ENCODE measurements at regions of chr2 and their contacts with region 1.

Region 1: GRCh38 chr2:84881581-84882414 is 914 bp upstream of the TRABD2A start:
- DNase-seq: peak; percentile 96
- H3K4me3 Mint-ChIP-seq: peak overlapping the region; percentile 94
- H3K27ac Mint-ChIP-seq: peak overlapping the region; percentile 96
- H3K4me1 Mint-ChIP-seq: peaks cover 54% of the 10 kb centered on the region
- H3K27me3 Mint-ChIP-seq: no peaks in the 10 kb centered on the region

Region 2: DNA sequence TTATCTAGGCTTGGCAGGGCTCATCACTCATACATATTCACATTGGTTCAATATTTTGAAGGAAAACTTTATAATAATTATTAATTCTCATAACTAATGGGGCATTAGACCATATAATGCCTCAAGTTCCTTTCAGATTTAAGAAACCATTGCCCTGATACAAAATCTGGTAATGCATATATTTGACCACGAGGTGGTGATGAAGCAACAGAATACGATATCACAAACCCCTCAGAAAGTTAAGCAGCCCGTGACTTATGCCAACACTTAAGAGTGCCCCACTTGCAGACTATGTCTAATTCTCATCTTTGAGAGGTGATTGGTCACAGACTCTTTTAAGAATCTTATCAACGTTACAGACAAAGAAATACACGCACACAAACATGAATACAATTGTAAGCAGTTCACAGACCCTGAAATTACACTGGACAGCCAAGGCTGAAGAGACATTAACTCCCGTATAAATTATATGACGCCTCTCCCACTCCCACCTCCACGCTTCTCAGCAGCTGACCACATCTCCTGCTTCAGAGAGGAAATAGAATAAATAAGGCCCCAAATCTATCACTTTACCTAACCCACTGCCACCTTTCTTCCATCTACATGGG is 386.2 kb before region 1 on chr2:
- intact Hi-C with region 1: loop called (anchors 1 kb)
- DNase-seq: peak; percentile 84
- H3K4me3 Mint-ChIP-seq: no peak overlapping the region
- H3K27ac Mint-ChIP-seq: no peak overlapping the region
- H3K4me1 Mint-ChIP-seq: peaks cover 10% of the 10 kb centered on the region
- H3K27me3 Mint-ChIP-seq: peaks cover 8% of the 10 kb centered on the region

Region 3: GRCh38 chr2:84781942-84782716 is 99.7 kb before region 1 on chr2:
- intact Hi-C with region 1: loop called (anchors 2 kb)
- DNase-seq: peak; percentile 86
- H3K4me3 Mint-ChIP-seq: peak overlapping the region; percentile 50
- H3K27ac Mint-ChIP-seq: peak overlapping the region; percentile 90
- H3K4me1 Mint-ChIP-seq: peaks cover 57% of the 10 kb centered on the region
- H3K27me3 Mint-ChIP-seq: no peaks in the 10 kb centered on the region

Region 4: GRCh38 chr2:84807063-84807830 is 74.6 kb before region 1 on chr2:
- intact Hi-C with region 1: no loop called
- DNase-seq: no peak
- H3K4me3 Mint-ChIP-seq: no peak overlapping the region
- H3K27ac Mint-ChIP-seq: no peak overlapping the region
- H3K4me1 Mint-ChIP-seq: peaks cover 2% of the 10 kb centered on the region
- H3K27me3 Mint-ChIP-seq: peaks cover 8% of the 10 kb centered on the region

Region 5: DNA sequence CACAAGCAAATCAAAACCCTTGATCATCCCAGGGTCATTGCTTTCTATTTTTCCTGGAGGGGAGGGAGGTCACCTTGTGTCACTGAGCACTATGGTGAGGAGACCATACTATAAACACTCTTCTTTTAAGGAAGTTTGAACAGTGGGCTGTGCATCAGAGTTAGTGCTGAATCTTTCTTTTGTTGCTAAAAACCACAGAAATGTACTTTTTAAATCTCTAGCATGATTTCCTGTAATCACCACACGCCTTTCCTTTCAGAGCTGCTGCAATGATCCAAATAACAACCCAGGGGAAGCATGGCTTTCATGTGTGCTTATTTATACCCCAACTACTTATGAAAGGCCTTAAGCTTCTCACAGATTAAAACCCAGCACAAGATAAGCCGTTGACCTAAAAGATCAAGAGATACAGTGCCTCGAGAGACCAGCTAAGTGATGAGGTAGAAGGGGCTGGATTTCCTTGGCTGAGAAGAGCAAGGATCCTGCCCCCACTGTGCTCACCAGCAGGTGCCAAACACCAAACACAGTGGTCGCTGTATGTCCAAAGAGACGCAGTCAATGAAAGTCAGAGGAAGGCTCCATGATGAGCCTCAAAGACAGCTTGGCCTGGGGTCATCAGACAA is 35.6 kb before region 1 on chr2:
- intact Hi-C with region 1: loop called (anchors 2 kb)
- DNase-seq: peak; percentile 88
- H3K4me3 Mint-ChIP-seq: peak overlapping the region; percentile 70
- H3K27ac Mint-ChIP-seq: peak overlapping the region; percentile 92
- H3K4me1 Mint-ChIP-seq: peaks cover 84% of the 10 kb centered on the region
- H3K27me3 Mint-ChIP-seq: no peaks in the 10 kb centered on the region

Region 6: DNA sequence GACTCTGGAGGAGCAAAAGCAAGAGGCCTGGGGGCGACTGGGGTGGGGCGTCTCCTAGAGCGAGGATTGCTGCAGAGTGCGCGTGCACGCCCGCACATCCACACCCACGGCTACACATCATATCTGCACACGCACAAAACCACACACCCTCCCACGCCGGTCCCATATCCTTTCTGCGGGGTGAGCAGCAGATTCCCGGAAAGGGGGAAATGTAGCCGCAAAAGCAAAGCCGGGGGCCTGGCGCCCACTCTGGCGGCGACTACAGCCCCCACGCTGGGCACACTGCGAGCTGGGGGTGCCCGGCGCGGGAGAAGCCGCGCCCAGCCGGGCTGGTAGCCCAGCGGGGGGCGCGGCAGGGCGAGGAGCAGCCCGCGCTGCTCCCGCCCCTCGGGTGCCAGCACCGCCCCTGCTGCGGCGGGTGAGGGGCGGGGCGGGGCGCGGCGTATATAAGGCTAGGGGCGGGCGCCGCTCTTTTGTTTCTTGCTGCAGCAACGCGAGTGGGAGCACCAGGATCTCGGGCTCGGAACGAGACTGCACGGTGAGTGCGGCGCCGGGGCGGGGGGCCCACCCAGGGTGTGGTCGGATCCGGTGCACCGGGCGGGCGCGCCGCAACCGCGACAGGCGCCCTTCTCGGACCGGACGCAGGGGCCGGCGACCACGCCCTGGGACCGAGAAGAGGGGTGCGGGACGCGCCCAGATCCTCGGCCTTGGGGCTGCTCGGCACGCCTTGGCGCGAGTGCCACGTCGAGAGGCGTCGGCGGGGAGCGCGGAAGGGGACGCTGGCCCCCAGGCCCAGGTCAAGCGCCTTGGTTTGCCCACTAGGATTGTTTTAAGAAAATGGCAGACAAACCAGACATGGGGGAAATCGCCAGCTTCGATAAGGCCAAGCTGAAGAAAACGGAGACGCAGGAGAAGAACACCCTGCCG is 23.6 kb after region 1 on chr2 and contains the start of gene TMSB10:
- intact Hi-C with region 1: loop called (anchors 1 kb)
- DNase-seq: peak; percentile 97
- H3K4me3 Mint-ChIP-seq: peak within 1 kb of the TSS; percentile 91
- H3K27ac Mint-ChIP-seq: peak within 1 kb of the TSS; percentile 95
- H3K4me1 Mint-ChIP-seq: peaks cover 62% of the 10 kb centered on the region
- H3K27me3 Mint-ChIP-seq: no peaks in the 10 kb centered on the region
- total RNA-seq, gene TMSB10: 2,196 and 2,218 TPM in 2 replicates